T-cell (primary cell): ENCODE measurements at regions of chr17 and their contacts with region 1.

Region 1: GRCh38 chr17:68085767-68086381 is 50.3 kb downstream of the KPNA2 start:
- DNase-seq: peak in 3 of 35 experiments; percentile 14 to 41 (median 20)
- ATAC-seq: peak; percentile 33 to 57 (median 40)
- H3K4me3 ChIP-seq: peak overlapping the region in 1 of 2 donors; percentile 29
- H3K4me3 Mint-ChIP-seq: peak overlapping the region; percentile 70 to 85 (median 72)
- H3K27ac ChIP-seq: peak overlapping the region; percentile 15
- H3K27ac Mint-ChIP-seq: peak overlapping the region; percentile 88 to 89
- H3K4me1 ChIP-seq: peaks cover 14 to 38% of the 10 kb centered on the region in 2 experiments
- H3K4me1 Mint-ChIP-seq: peaks cover 51 to 54% (median 53%) of the 10 kb centered on the region in 3 donors
- H3K27me3 ChIP-seq: no peaks in the 10 kb centered on the region
- H3K27me3 Mint-ChIP-seq: no peaks in the 10 kb centered on the region

Region 2: DNA sequence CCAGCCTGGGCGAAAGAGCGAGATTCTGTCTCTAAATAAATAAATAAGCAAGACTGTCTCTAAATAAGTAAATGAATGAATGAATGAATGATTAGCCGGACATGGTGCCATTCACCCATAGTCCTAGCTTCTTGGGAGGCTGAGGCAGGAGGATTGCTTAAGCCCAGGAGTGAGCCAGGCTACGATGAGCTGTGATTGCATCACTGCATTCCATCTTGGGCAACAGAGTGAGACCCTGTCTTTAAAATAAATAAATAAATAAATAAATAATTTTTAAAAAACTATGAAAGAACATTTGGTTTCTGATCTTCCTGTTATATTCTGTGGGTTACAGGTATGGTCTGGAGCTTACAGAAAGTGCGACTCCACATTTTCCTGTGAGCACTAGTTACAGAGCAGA is 154.6 kb before region 1 on chr17:
- CTCF ChIA-PET with region 1: interaction called in 1 of 2 experiments, 3 read pairs
- POLR2A ChIA-PET with region 1: interaction called in 1 of 2 experiments, 12 read pairs
- DNase-seq: no peak
- ATAC-seq: no peak
- H3K4me3 ChIP-seq: no peak overlapping the region
- H3K4me3 Mint-ChIP-seq: no peak overlapping the region
- H3K27ac ChIP-seq: no peak overlapping the region
- H3K27ac Mint-ChIP-seq: no peak overlapping the region
- H3K4me1 ChIP-seq: no peaks in the 10 kb centered on the region
- H3K4me1 Mint-ChIP-seq: no peaks in the 10 kb centered on the region
- H3K27me3 ChIP-seq: no peaks in the 10 kb centered on the region
- H3K27me3 Mint-ChIP-seq: no peaks in the 10 kb centered on the region

Region 3: DNA sequence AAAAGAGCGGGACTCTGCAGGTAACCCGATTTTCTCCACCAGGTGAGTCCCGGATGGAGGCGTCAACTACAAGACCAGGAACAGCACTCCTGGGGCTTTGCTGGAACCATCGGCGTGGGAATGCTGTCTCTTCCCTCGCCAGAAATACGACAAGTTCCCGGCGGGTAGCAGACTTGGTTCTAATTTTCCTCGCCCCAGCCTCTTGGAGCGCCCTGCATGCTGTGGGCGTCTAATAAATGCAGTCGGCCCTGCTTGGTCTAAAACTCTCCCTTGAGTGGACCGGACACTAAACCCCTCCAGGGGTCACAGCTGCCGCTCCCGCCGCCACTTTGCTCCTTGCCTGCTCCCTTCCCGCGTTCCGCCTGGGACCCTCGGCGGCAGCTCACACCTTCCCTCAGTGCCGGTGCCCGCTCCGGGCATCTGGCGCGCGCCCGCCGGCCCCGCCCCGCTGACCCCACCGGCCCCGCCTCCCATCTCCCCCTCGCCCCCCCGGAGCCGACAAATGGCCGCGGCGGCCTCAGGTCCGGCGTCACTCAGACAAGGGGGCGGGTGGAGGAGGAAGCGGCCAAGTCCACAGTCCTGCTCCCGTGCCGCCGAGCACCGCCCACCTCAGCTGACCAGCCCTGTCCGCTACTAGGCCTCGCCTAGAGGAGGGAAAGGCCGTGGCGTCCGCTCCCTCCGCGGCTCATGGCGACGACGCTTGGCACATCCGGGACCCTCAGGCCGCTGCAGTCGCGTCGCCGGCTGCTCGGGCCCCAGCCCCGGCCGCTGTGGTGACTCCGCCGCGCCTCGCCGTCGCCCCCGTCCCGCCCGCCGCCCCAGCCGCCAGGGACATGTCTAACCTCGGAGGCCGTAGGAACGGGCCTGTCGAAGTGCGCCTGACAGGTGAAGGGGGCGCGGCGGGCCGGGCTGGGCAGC is 15.5 kb after region 1 on chr17:
- CTCF ChIA-PET with region 1: no interaction called
- POLR2A ChIA-PET with region 1: no interaction called
- DNase-seq: peak in 34 of 35 experiments; percentile 13 to 77 (median 52)
- ATAC-seq: peak; percentile 70 to 73 (median 71)
- H3K4me3 ChIP-seq: peak overlapping the region; percentile 71 to 78
- H3K4me3 Mint-ChIP-seq: peak overlapping the region; percentile 91 to 96 (median 95)
- H3K27ac ChIP-seq: peak overlapping the region; percentile 83
- H3K27ac Mint-ChIP-seq: peak overlapping the region; percentile 91 to 93
- H3K4me1 ChIP-seq: peaks cover 14 to 19% of the 10 kb centered on the region in 2 experiments
- H3K4me1 Mint-ChIP-seq: peaks cover 35 to 45% (median 42%) of the 10 kb centered on the region in 3 donors
- H3K27me3 ChIP-seq: no peaks in the 10 kb centered on the region
- H3K27me3 Mint-ChIP-seq: no peaks in the 10 kb centered on the region

Region 4: GRCh38 chr17:68247445-68248198 is 161.7 kb after region 1 on chr17 and contains the start of gene AMZ2:
- CTCF ChIA-PET with region 1: no interaction called
- POLR2A ChIA-PET with region 1: interaction called in 1 of 2 experiments, 10 read pairs
- DNase-seq: peak; percentile 88 to 99 (median 94)
- ATAC-seq: peak; percentile 88 to 95 (median 91)
- H3K4me3 ChIP-seq: peak within 1 kb of the TSS; percentile 69 to 77
- H3K4me3 Mint-ChIP-seq: peak within 1 kb of the TSS; percentile 78 to 93 (median 84)
- H3K27ac ChIP-seq: peak within 1 kb of the TSS; percentile 97
- H3K27ac Mint-ChIP-seq: peak within 1 kb of the TSS; percentile 92 to 99
- H3K4me1 ChIP-seq: peaks cover 4 to 42% of the 10 kb centered on the region in 2 experiments
- H3K4me1 Mint-ChIP-seq: peaks cover 30 to 56% (median 36%) of the 10 kb centered on the region in 3 donors
- H3K27me3 ChIP-seq: no peaks in the 10 kb centered on the region
- H3K27me3 Mint-ChIP-seq: no peaks in the 10 kb centered on the region
- total RNA-seq, gene AMZ2: 50.9 to 81.8 (median 60.5) TPM